Naive thymus-derived CD4-positive, alpha-beta T cell (primary cell): ENCODE measurements at regions of chr20 and their contacts with region 1.

Region 1: DNA sequence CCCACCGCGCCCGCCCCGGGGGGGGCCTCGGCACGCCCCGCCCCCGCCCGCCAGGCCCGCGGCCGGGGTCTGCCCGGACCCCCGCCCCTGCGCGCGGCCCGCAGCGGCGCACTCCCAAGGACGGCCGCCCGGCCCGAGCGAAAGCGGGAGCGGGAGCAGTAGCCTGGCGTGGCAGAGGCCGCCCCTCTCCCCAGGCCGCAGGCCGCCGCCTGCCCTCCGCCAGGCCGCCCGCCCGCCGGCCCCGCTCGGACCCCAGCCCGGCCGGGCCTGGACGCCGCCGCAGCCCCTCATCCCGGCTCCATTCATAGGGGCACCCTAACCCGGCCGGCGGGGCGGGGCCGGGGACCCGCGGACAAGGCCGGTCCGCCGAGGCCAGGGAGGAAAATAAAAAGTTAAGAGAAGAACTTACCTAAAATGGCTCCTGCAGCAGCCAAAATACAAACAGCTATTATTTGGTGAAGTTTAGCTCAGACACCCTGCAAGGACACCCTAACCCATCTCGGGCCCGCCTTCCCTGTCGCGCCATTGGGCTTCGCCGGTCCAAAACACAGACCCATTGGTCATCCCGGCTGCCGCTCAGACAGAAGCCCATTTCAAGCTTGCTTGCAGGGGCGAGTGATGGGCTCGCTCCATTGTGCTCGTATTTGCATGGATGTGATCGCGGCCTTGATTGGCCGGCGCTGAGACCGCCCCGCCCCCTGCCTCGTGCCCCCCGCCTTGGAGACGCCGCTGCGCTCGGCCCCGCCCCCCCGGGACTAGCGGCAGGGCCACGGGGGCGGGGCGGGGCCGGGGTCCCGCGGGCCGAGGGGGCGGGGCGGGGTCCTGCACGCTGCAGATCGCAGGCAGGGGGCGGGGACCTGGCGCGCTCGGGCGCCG is at the start of gene CHD6:
- DNase-seq: peak; percentile 96 to 100 (median 99)
- ATAC-seq: peak; percentile 96
- H3K4me3 ChIP-seq: peak within 1 kb of the TSS; percentile 66
- H3K4me3 Mint-ChIP-seq: peak within 1 kb of the TSS; percentile 85 to 97 (median 94)
- H3K27ac ChIP-seq: peak within 1 kb of the TSS; percentile 80
- H3K27ac Mint-ChIP-seq: peak within 1 kb of the TSS; percentile 86 to 95 (median 91)
- H3K4me1 ChIP-seq: peaks cover 21 to 31% of the 10 kb centered on the region in 2 donors
- H3K4me1 Mint-ChIP-seq: peaks cover 31 to 54% (median 53%) of the 10 kb centered on the region in 7 donors
- H3K27me3 ChIP-seq: no peaks in the 10 kb centered on the region
- H3K27me3 Mint-ChIP-seq: peaks cover 0 to 16% (median 0%) of the 10 kb centered on the region in 5 donors
- total RNA-seq, gene CHD6: 46.3 to 132 (median 109) TPM

Region 2: GRCh38 chr20:41028348-41029148 is 589.6 kb before region 1 on chr20 and contains the start of gene TOP1:
- CTCF ChIA-PET with region 1: no interaction called
- POLR2A ChIA-PET with region 1: no interaction called
- intact Hi-C with region 1: loop called in 1 of 2 experiments (anchors 1 kb)
- DNase-seq: peak; percentile 98 to 100 (median 99)
- ATAC-seq: peak; percentile 99
- H3K4me3 ChIP-seq: peak within 1 kb of the TSS; percentile 58
- H3K4me3 Mint-ChIP-seq: peak within 1 kb of the TSS; percentile 79 to 96 (median 94)
- H3K27ac ChIP-seq: peak within 1 kb of the TSS; percentile 99
- H3K27ac Mint-ChIP-seq: peak within 1 kb of the TSS; percentile 88 to 97 (median 96)
- H3K4me1 ChIP-seq: peaks cover 32 to 38% of the 10 kb centered on the region in 2 donors
- H3K4me1 Mint-ChIP-seq: peaks cover 41 to 52% (median 48%) of the 10 kb centered on the region in 7 donors
- H3K27me3 ChIP-seq: no peaks in the 10 kb centered on the region
- H3K27me3 Mint-ChIP-seq: no peaks in the 10 kb centered on the region
- total RNA-seq, gene TOP1: 32.0 to 82.8 (median 43.4) TPM

Region 3: GRCh38 chr20:41110930-41111577 is 507.1 kb before region 1 on chr20:
- CTCF ChIA-PET with region 1: no interaction called
- POLR2A ChIA-PET with region 1: no interaction called
- intact Hi-C with region 1: no loop called
- DNase-seq: no peak
- ATAC-seq: no peak
- H3K4me3 ChIP-seq: no peak overlapping the region
- H3K4me3 Mint-ChIP-seq: no peak overlapping the region
- H3K27ac ChIP-seq: no peak overlapping the region
- H3K27ac Mint-ChIP-seq: peak overlapping the region in 2 of 9 donors; percentile 51 to 76
- H3K4me1 ChIP-seq: no peaks in the 10 kb centered on the region
- H3K4me1 Mint-ChIP-seq: peaks cover 0 to 5% (median 0%) of the 10 kb centered on the region in 7 donors
- H3K27me3 ChIP-seq: no peaks in the 10 kb centered on the region
- H3K27me3 Mint-ChIP-seq: no peaks in the 10 kb centered on the region

Region 4: DNA sequence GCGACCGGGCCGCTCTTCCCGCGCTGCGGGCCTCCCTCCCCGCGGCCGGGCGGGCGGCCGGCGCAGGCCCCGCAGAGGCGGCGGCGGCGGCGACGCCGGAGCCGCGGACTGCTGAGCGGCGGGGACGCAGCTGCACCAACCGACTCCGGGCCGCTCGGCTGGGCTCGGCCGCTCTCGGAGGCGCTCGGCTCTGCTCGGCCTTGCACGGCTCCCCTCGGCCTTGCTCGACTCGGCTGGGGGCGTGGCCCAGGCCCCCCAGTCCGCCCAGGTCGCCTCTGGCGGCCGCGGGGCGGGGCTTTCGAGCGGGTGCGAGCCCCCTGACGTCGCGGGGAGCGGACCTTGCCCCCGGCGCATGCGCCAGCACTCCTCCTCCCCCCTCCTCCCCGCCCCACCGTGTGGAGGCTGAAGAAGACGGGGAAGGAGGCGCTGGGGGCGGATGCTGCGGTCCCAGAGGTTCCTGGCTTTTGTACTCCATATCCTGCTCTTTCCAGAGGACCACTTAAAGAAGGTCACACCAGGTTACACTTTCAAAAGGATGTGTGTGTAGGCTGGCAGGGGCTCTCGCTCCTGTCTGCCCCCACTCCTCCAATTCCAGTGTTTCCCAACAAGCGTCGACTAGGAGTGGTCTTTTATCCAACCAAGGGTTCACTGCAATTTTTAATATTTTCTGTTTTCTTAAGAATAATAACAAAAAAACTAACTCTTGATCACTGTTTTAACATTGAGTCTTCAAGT is 300.5 kb before region 1 on chr20 and contains the start of gene ZHX3:
- CTCF ChIA-PET with region 1: no interaction called
- POLR2A ChIA-PET with region 1: no interaction called
- intact Hi-C with region 1: loop called (anchors 1 kb)
- DNase-seq: peak; percentile 90 to 97 (median 95)
- ATAC-seq: peak; percentile 99
- H3K4me3 ChIP-seq: peak within 1 kb of the TSS; percentile 47
- H3K4me3 Mint-ChIP-seq: peak within 1 kb of the TSS; percentile 74 to 92 (median 84)
- H3K27ac ChIP-seq: peak within 1 kb of the TSS; percentile 75
- H3K27ac Mint-ChIP-seq: peak within 1 kb of the TSS; percentile 48 to 87 (median 84)
- H3K4me1 ChIP-seq: no peaks in the 10 kb centered on the region
- H3K4me1 Mint-ChIP-seq: peaks cover 11 to 34% (median 28%) of the 10 kb centered on the region in 7 donors
- H3K27me3 ChIP-seq: no peaks in the 10 kb centered on the region
- H3K27me3 Mint-ChIP-seq: peaks cover 0 to 7% (median 0%) of the 10 kb centered on the region in 5 donors
- total RNA-seq, gene ZHX3: 7.9 to 12.8 (median 9.8) TPM

Region 5: DNA sequence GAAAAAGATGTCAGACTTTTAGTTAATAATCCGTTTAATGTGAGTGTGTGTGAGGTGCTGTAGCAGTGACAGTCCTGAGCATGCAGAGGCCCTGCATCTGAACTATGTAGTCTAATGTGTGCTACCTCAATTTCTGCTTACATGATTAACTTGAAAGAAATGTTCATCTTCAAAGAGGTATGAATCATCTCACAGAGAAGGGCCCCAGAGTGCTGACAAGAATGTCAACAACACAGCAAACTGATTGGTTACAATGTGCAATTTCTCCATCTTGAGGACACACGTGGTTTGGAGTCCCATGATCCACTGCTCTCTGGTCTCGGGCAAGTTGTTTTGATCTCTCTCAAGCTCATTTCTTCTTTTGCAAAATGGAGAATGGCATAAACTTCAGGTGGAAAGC is 189.9 kb before region 1 on chr20:
- CTCF ChIA-PET with region 1: no interaction called
- POLR2A ChIA-PET with region 1: interaction called, 9 read pairs
- intact Hi-C with region 1: loop called (anchors 1 kb)
- DNase-seq: peak in 8 of 9 donors; percentile 29 to 76 (median 57)
- ATAC-seq: peak; percentile 95
- H3K4me3 ChIP-seq: no peak overlapping the region
- H3K4me3 Mint-ChIP-seq: peak overlapping the region in 9 of 10 donors; percentile 3 to 85 (median 47)
- H3K27ac ChIP-seq: peak overlapping the region; percentile 54
- H3K27ac Mint-ChIP-seq: peak overlapping the region; percentile 31 to 98 (median 89)
- H3K4me1 ChIP-seq: peaks cover 0 to 22% of the 10 kb centered on the region in 2 donors
- H3K4me1 Mint-ChIP-seq: peaks cover 19 to 54% (median 51%) of the 10 kb centered on the region in 7 donors
- H3K27me3 ChIP-seq: no peaks in the 10 kb centered on the region
- H3K27me3 Mint-ChIP-seq: no peaks in the 10 kb centered on the region

Region 6: DNA sequence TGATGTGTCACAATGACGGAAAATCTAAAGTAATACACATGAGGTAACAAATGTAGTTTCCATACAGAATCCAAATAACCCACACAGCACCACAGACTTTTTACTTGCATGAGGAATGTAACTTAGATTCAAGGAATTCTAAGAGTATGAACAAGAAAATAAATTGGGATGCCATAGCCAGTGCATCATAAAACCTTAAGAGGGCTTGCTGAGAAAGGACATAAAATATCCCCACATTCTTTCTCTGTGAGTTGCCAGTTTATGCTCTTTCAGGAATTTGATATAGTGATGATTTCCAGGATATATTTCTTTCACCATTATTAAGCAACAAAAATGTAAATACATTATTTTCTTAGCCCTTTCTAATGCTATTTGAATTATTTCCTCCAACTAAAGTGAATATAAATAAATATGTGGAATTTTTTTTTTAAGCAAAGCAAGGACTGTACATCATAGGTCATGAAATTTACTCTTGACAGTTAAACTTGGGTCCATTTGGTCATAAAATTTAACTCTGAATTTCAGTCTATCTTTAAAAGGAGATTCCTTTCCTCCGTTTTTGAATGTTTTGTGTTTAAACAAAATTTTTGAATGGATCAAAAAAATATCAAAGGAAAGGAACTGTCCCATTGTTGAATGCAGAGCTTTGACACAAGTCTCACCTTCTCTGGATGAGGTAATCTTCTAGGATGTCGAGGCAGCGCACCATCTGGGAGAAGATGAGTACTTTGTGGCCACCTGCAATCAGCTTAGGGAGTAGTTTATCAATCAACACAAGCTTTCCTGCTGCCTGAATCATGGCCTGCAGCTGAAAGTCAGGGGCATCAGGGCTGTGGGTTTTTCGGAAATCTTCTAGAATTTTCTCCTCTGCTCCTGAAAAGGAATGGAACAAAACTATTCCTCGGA is 135.3 kb before region 1 on chr20:
- CTCF ChIA-PET with region 1: no interaction called
- POLR2A ChIA-PET with region 1: interaction called, 4 read pairs
- intact Hi-C with region 1: loop called in 1 of 2 experiments (anchors 2 kb)
- DNase-seq: no peak
- ATAC-seq: no peak
- H3K4me3 ChIP-seq: no peak overlapping the region
- H3K4me3 Mint-ChIP-seq: no peak overlapping the region
- H3K27ac ChIP-seq: no peak overlapping the region
- H3K27ac Mint-ChIP-seq: peak overlapping the region in 7 of 9 donors; percentile 25 to 84 (median 68)
- H3K4me1 ChIP-seq: peaks cover 0 to 18% of the 10 kb centered on the region in 2 donors
- H3K4me1 Mint-ChIP-seq: peaks cover 11 to 35% (median 29%) of the 10 kb centered on the region in 7 donors
- H3K27me3 ChIP-seq: no peaks in the 10 kb centered on the region
- H3K27me3 Mint-ChIP-seq: no peaks in the 10 kb centered on the region

Region 7: DNA sequence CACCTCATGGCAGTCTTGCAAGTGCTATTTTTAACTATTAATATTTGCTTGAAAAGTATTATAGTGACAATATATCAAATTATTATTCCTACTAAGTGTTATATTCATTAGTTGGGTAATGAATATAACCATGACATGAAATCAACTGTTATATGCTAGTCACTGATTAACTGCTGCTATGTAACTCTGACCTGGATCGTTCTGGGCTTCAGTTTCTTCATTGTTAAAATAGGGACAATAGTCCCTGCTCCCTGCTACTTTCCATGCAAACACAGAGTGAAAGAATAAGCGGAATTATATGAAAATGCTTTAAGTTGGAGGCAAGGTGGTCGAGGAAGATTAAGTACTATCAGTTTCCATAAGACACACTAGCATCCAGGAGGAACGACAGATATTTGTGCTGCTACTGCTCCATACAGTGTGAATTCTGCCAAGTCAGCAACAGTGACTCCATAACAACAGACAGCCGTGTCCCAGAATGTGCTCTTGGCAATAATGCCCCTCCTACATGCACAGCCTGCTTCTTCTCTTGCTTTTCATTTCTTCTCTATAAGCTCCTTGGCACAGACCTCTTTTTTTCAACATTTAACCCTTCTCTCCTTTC is 107.2 kb before region 1 on chr20:
- CTCF ChIA-PET with region 1: no interaction called
- POLR2A ChIA-PET with region 1: no interaction called
- intact Hi-C with region 1: no loop called
- DNase-seq: no peak
- ATAC-seq: no peak
- H3K4me3 ChIP-seq: no peak overlapping the region
- H3K4me3 Mint-ChIP-seq: no peak overlapping the region
- H3K27ac ChIP-seq: no peak overlapping the region
- H3K27ac Mint-ChIP-seq: peak overlapping the region in 2 of 9 donors; percentile 1 to 76
- H3K4me1 ChIP-seq: no peaks in the 10 kb centered on the region
- H3K4me1 Mint-ChIP-seq: peaks cover 17 to 57% (median 54%) of the 10 kb centered on the region in 7 donors
- H3K27me3 ChIP-seq: no peaks in the 10 kb centered on the region
- H3K27me3 Mint-ChIP-seq: no peaks in the 10 kb centered on the region

Region 8: DNA sequence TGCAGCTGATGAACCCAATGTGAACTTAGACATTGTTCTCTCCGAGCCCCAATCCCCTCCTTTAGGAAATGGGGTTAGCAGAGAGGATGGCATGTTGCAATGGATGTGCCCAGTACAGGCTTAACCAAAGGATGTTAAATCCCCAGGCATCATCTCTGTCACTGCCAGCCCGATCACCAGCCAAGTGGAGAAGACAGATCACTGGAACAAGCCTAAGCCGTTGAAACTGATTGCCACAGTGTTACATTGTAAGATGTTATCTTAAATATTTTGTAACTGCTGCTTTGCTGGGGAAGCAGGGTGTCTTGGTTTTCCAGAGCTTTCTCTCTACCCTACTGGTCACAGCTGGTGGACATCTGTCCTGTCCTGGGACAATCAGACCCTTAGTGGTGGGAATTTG is 783.4 kb after region 1 on chr20:
- CTCF ChIA-PET with region 1: no interaction called
- POLR2A ChIA-PET with region 1: no interaction called
- intact Hi-C with region 1: no loop called
- DNase-seq: no peak
- ATAC-seq: no peak
- H3K4me3 ChIP-seq: no peak overlapping the region
- H3K4me3 Mint-ChIP-seq: no peak overlapping the region
- H3K27ac ChIP-seq: no peak overlapping the region
- H3K27ac Mint-ChIP-seq: no peak overlapping the region
- H3K4me1 ChIP-seq: no peaks in the 10 kb centered on the region
- H3K4me1 Mint-ChIP-seq: no peaks in the 10 kb centered on the region
- H3K27me3 ChIP-seq: no peaks in the 10 kb centered on the region
- H3K27me3 Mint-ChIP-seq: peaks cover 0 to 9% (median 0%) of the 10 kb centered on the region in 5 donors

Region 9: GRCh38 chr20:43456809-43457639 is 1838.9 kb after region 1 on chr20:
- CTCF ChIA-PET with region 1: no interaction called
- POLR2A ChIA-PET with region 1: no interaction called
- intact Hi-C with region 1: loop called in 1 of 2 experiments (anchors 5 kb)
- DNase-seq: peak in 7 of 9 donors; percentile 73 to 92 (median 91)
- ATAC-seq: peak; percentile 82
- H3K4me3 ChIP-seq: peak overlapping the region; percentile 86
- H3K4me3 Mint-ChIP-seq: peak overlapping the region; percentile 79 to 100 (median 94)
- H3K27ac ChIP-seq: peak overlapping the region; percentile 100
- H3K27ac Mint-ChIP-seq: peak overlapping the region; percentile 96 to 100 (median 99)
- H3K4me1 ChIP-seq: peaks cover 10 to 29% of the 10 kb centered on the region in 2 donors
- H3K4me1 Mint-ChIP-seq: peaks cover 24 to 42% (median 35%) of the 10 kb centered on the region in 7 donors
- H3K27me3 ChIP-seq: no peaks in the 10 kb centered on the region
- H3K27me3 Mint-ChIP-seq: peaks cover 0 to 14% (median 4%) of the 10 kb centered on the region in 5 donors